ENCODE measurements at regions of chr15 and their contacts with region 1.

Region 1: DNA sequence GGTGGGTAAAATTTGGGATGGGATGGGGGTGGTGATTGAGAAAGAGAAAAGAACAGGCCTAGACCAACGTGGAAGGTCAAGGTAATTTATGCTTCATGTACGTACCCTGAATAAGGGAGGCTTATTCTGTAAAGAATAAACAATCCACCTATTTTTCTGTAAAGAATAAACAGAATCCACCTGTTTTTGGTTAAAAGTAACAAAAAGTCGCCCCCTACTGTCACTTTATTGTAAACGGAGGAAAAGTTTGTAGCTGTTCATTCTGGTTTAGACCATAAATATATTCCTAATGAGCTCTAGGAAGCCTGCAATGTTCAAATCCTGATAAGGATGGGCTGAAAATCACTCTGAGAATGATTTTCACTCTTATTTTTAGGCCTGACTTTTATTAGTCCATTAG is 23.5 kb upstream of the SQOR start:
- DNase-seq: peak in 1 of 2 experiments; percentile 35
- H3K4me3 ChIP-seq: no peak overlapping the region
- H3K27ac ChIP-seq: no peak overlapping the region
- H3K4me1 ChIP-seq: peaks cover 3% of the 10 kb centered on the region; the same call in 1 of the 2 replicates
- H3K27me3 ChIP-seq: no peaks in the 10 kb centered on the region
- CTCF ChIP-seq: peak; percentile 68

Region 2: DNA sequence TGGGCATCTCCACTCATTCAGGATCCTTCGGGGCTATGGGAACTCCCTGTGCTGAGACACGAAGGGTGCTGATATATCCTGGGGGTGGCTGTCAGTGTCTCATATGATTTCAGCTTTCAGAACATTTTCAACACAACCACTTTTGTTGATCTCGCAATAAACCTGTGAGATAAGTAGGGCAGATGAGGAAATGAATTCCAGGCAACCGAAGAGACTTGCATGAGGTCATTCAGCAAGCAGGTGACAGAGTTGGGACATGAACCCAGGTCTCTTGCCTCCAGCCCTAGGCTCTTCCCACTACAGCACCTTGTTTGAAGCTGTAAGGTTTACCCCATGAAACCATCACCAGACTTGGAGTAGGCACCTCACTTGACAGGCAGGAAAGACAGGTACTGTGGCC is 464.9 kb before region 1 on chr15:
- CTCF ChIA-PET with region 1: no interaction called
- POLR2A ChIA-PET with region 1: interaction called, 11 read pairs
- intact Hi-C with region 1: no loop called
- DNase-seq: peak; percentile 22 to 71
- H3K4me3 ChIP-seq: no peak overlapping the region
- H3K27ac ChIP-seq: peak overlapping the region; percentile 9; the same call in 1 of the 2 replicates
- H3K4me1 ChIP-seq: peaks cover 15% of the 10 kb centered on the region
- H3K27me3 ChIP-seq: no peaks in the 10 kb centered on the region
- CTCF ChIP-seq: no peak

Region 3: DNA sequence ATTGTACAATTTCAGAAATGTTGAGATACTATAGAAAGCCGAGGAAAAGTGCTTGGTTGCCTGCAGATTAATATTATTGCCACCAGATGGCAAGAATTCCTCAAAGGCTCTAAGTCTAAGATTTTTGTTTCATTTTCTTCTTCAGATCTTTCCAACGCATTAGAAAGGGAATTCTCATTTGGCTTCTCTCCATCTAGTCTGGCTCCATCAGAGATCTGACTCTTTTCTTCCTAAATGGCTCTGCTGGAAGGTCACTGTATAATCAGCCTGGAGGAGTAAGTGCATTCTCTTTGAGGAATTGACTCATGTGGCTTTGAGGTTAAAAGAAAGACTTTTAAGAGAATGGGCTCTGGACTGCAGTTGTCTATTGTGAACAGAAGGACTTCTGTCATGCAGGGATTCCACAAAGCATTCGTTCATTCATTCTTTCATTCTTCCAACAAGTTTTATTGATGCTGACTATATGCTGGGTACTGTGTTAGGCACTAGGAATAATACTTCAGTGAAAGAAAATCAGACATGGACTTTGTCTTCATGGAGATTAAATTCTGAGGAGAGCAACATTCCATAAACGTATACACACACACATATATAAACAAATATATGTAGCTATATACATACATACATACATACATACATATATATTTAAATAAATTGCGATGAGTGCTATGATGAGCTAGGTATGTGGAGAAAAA is 303.9 kb before region 1 on chr15:
- CTCF ChIA-PET with region 1: no interaction called
- POLR2A ChIA-PET with region 1: no interaction called
- intact Hi-C with region 1: loop called (anchors 10 kb)
- DNase-seq: peak; percentile 3 to 40
- H3K4me3 ChIP-seq: no peak overlapping the region; the same call in 1 of the 2 replicates
- H3K27ac ChIP-seq: no peak overlapping the region
- H3K4me1 ChIP-seq: no peaks in the 10 kb centered on the region
- H3K27me3 ChIP-seq: no peaks in the 10 kb centered on the region
- CTCF ChIP-seq: peak; percentile 59

Region 4: DNA sequence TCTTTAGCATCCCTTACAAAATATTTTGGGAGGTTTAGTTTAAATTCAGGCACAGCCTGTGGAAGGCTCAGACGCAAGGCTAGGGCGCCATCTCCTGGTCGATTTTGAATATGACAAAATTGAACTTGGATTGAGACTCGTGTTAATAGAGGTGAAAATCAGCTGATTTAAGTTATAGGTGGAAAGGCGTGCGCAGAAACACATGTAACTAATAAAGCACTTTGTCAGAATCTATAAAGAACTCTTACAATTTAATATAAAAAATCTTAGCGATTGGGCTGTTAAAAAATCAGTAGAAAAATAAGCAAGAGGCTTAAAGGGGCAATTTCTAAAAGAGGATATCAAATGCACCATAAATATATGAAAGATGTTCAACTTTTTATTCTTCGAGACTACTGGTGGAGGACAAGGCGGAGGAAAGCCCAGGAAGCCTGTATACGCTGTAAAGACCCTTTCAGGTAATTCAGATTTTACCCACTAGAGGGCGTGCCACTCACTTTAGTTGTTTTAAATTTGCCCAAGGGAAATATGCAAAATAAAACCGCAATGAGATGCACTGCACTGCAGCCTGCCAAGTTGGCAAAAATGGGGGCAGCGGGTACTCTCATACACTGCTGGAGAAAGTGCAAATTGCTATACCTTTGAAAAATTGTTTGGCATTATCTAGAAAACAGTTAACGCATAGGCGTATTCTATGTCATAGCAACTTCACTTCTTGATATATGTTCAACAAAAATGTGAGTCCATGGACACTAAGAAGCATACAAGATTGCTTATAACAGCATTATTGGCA is 153.5 kb before region 1 on chr15:
- CTCF ChIA-PET with region 1: interaction called, 11 read pairs
- POLR2A ChIA-PET with region 1: no interaction called
- intact Hi-C with region 1: loop called (anchors 1 kb)
- DNase-seq: peak; percentile 66 to 67
- H3K4me3 ChIP-seq: peak overlapping the region; percentile 56
- H3K27ac ChIP-seq: peak overlapping the region; percentile 89
- H3K4me1 ChIP-seq: peaks cover 48% of the 10 kb centered on the region
- H3K27me3 ChIP-seq: no peaks in the 10 kb centered on the region
- CTCF ChIP-seq: peak; percentile 88

Region 5: DNA sequence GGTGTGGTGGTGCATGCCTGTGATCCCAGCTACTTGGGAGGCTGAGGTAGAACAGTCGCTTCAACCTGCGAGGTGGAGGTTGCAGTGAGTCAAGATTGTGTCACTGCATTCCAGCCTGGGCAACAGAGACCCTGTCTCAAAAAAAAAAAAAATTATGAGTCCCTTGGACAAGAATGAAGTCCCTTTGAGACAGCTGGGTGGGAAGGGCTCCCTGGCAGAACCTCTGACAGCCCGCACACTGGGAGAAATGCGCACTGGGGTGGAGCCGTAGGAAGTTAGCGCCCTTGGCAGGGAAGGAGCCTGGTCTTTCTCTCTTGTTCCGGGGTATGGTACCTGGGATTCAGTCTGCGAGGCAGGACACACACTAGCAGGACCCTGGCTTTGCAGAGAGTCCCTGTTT is 140.2 kb before region 1 on chr15:
- CTCF ChIA-PET with region 1: no interaction called
- POLR2A ChIA-PET with region 1: no interaction called
- intact Hi-C with region 1: no loop called
- DNase-seq: no peak
- H3K4me3 ChIP-seq: no peak overlapping the region
- H3K27ac ChIP-seq: no peak overlapping the region
- H3K4me1 ChIP-seq: no peaks in the 10 kb centered on the region
- H3K27me3 ChIP-seq: no peaks in the 10 kb centered on the region
- CTCF ChIP-seq: no peak

Region 6: DNA sequence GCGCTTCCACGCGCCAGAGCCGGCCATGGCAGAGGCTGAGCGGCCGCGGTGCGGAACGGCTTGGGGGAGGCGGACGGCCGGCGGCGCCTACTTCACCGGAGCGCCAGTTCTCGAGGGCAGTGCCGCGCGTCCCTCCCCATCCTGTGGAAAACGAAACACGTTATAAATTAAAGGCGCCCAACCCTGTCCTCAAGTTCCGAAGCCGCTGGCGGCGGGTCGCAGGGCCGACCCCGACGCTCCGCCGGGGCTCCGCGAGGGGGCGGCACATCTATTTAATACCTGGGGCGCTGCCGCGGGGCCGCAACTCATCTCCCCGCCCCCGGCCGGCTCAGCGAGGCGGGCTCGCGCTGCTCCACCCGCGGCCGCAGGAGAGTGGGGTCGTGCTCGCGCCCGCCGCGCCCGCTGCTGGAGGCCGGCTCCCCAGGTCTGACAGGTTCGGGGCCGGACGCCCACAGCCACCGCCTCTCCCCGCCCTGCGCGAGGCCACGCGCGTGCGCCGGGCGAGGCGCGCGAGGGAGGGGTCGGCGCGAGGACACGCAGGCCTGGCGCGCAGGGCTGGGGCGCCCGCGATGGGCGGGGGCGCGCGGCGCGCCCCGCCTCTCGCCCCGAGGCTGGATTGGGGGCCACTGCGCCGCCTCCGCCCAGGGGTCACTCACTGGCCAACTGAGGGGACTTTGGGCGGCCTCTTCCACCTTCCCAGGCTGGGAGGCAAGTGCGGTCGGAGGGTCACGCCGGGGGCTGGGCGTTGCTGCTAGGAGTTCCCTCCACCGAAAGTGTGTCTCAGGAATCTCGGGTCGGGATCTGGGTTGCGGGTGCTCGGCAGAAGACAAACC is 88.8 kb before region 1 on chr15 and contains the start of gene SLC30A4:
- CTCF ChIA-PET with region 1: no interaction called
- POLR2A ChIA-PET with region 1: no interaction called
- intact Hi-C with region 1: loop called (anchors 5 kb)
- DNase-seq: peak in 1 of 2 experiments; percentile 81
- H3K4me3 ChIP-seq: peak within 1 kb of the TSS; percentile 73
- H3K27ac ChIP-seq: no peak within 1 kb of the TSS
- H3K4me1 ChIP-seq: peaks cover 9% of the 10 kb centered on the region; the same call in 1 of the 2 replicates
- H3K27me3 ChIP-seq: no peaks in the 10 kb centered on the region
- CTCF ChIP-seq: no peak; the same call in 1 of the 2 replicates
- total RNA-seq, gene SLC30A4: 2.7 and 3.0 TPM in 2 replicates

Region 7: GRCh38 chr15:45732662-45733061 is 121.4 kb after region 1 on chr15:
- CTCF ChIA-PET with region 1: no interaction called
- POLR2A ChIA-PET with region 1: no interaction called
- intact Hi-C with region 1: no loop called
- DNase-seq: no peak
- H3K4me3 ChIP-seq: no peak overlapping the region
- H3K27ac ChIP-seq: no peak overlapping the region
- H3K4me1 ChIP-seq: no peaks in the 10 kb centered on the region
- H3K27me3 ChIP-seq: peaks cover 54% of the 10 kb centered on the region
- CTCF ChIP-seq: no peak

Region 8: DNA sequence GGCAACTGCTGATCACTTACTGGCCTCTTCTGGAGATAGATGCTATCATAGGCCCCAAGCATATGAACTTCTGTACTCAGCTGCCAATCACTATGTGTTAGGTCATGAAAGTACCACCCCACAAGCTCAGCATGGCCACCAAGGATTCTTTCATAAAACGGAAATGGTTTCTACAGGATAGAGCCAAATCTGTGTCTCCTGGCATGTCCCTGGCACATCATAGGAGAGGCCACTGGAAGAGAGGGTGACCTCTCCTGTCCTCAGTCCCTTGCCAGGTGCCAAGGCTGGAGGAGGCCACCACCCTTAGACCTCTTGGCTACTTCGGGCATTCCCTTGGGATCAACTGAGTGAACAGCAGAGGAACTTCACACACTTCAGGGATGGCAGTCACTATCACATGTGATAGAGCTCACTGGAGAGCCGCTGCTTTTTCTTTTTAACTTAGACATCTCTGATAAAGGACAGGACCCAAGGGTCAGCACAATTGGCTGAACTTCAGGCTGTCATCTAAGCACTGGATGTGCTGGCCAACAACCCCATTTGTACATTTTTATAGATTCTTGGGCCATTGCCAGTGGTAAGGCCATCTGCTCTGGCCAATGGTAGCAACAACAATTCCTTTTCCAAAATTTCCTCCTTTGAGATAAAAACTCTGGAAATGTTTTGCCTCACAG is 448.8 kb after region 1 on chr15:
- CTCF ChIA-PET with region 1: no interaction called
- POLR2A ChIA-PET with region 1: no interaction called
- intact Hi-C with region 1: no loop called
- DNase-seq: no peak
- H3K4me3 ChIP-seq: no peak overlapping the region
- H3K27ac ChIP-seq: no peak overlapping the region
- H3K4me1 ChIP-seq: no peaks in the 10 kb centered on the region
- H3K27me3 ChIP-seq: no peaks in the 10 kb centered on the region
- CTCF ChIP-seq: no peak

Region 9: GRCh38 chr15:46231786-46232185 is 620.5 kb after region 1 on chr15:
- CTCF ChIA-PET with region 1: no interaction called
- POLR2A ChIA-PET with region 1: no interaction called
- intact Hi-C with region 1: no loop called
- DNase-seq: no peak
- H3K4me3 ChIP-seq: no peak overlapping the region
- H3K27ac ChIP-seq: no peak overlapping the region
- H3K4me1 ChIP-seq: no peaks in the 10 kb centered on the region
- H3K27me3 ChIP-seq: no peaks in the 10 kb centered on the region
- CTCF ChIP-seq: no peak

Measured in PC-9 (cell line).